Dorsolateral prefrontal cortex (tissue), 120 donors: ENCODE measurements at regions of chr4 and their contacts with region 1.

Region 1: GRCh38 chr4:114791976-114792375 is 193.4 kb downstream of the UGT8 start:
- DNase-seq: no peak
- H3K4me3 ChIP-seq: no peak overlapping the region
- H3K27ac ChIP-seq: no peak overlapping the region
- H3K27me3 ChIP-seq: peaks cover 0 to 2% (median 0%) of the 10 kb centered on the region in 45 donors
- CTCF ChIP-seq: no peak

Region 2: DNA sequence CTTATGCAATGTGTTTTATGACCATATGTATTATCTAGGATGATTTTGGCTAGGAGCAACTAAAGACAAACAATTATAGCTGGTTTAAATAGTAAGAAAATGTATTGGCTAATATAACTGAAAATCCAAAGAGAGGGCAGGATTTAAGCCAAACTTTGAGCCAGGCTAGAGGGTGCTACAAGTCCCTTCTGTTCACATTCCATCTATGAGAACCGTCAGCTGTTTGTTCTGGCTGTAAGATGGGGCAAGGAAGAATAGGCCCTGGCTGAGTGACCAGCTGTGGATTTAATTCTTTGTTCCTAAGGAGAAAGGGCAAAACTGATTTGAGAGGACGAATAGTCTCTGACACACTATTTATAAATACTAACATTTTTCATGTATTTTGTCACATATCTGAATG is 272.6 kb before region 1 on chr4:
- intact Hi-C with region 1: no loop called
- DNase-seq: no peak
- H3K4me3 ChIP-seq: no peak overlapping the region
- H3K27ac ChIP-seq: peak overlapping the region in 48 of 59 donors; percentile 4 to 81 (median 56)
- H3K27me3 ChIP-seq: no peaks in the 10 kb centered on the region
- CTCF ChIP-seq: peak in 31 of 56 donors; percentile 9 to 58 (median 31)

Region 3: DNA sequence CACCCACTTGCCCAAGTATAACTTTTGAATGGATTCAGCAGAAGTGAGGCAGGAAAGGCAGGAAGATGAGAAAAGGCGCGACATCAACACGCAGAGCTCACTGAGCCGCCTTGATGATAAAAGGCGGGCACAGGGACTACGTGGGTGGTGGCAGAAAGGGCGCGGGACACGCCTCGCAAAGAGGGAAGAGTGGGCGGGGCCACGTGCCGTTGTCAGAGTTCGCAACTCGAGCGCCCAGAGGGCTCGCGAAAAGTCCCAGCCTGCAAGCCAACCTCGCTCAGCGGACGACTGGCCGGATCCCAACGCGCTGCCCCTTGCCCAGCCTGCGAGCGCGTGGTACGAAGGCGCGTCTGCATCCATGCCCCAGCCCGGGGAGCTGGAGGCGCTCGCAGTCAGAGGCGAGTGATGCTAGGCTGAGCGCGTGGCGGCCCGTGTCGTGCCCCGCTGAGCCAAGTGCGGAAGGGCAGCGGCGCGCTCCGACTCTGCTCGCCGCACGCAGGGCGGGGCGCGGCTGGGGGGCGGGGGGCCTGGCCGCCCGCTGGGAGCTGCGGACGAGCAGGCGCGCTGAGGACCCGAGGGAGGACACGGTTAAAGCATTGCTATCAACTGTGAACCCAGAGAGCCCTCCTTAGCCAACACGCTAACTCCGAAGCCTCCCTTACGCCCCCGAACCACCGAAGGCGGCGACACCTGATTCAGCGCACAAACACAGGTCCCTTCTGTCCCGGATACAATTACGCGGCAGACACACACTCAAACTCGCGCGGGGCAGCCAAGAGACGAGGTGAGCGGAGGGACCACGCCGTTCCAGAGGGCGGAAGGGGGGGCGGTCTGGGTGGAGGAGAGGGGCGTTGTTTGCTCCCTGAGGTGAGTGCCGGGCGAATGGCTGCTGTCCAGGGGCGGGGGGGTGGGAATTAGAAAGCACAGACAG is 193.5 kb before region 1 on chr4 and contains the start of gene UGT8:
- intact Hi-C with region 1: no loop called
- DNase-seq: peak; percentile 56 to 82 (median 76)
- H3K4me3 ChIP-seq: peak within 1 kb of the TSS; percentile 52 to 86 (median 72)
- H3K27ac ChIP-seq: peak within 1 kb of the TSS; percentile 8 to 98 (median 92)
- H3K27me3 ChIP-seq: peaks cover 0 to 19% (median 0%) of the 10 kb centered on the region in 45 donors
- CTCF ChIP-seq: peak in 11 of 56 donors; percentile 12 to 41 (median 20)
- total RNA-seq, gene UGT8: 13.0 to 301 (median 73.0) TPM

Region 4: DNA sequence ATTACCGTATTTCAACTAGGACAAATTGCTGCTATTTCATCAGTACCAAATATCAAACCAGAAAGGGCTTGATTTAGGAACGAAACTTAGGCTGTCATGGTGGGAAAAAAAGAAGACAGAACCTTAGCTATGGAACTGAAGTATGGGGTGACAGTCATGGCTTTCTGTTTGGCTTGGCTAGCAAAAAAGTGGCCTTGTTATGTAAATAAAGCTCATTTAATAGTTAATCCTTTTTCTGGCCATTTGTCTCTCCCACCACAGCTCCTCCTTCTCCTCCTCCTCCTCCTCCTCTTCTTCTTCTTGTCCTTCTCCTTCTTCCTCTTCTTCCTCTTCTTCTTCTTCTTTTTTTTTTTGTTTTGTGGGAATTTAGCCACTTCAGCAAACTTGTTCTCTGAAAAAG is 756.1 kb after region 1 on chr4:
- intact Hi-C with region 1: loop called in 1 of 2 experiments (anchors 10 kb)
- DNase-seq: no peak
- H3K4me3 ChIP-seq: no peak overlapping the region
- H3K27ac ChIP-seq: no peak overlapping the region
- H3K27me3 ChIP-seq: peaks cover 0 to under 1% (median 0%) of the 10 kb centered on the region in 45 donors
- CTCF ChIP-seq: no peak